ENCODE measurements at regions of chr20 and their contacts with region 1.

Region 1: GRCh38 chr20:34955232-34956040 is at the starts of genes GSS and MYH7B:
- DNase-seq: peak; percentile 96
- H3K4me3 ChIP-seq: peak within 1 kb of the TSS; percentile 67 to 68
- H3K27ac ChIP-seq: peak within 1 kb of the TSS; percentile 90 to 93
- H3K4me1 ChIP-seq: no peaks in the 10 kb centered on the region
- H3K27me3 ChIP-seq: no peaks in the 10 kb centered on the region
- CTCF ChIP-seq: peak in 3 of 4 experiments; percentile 54 to 79 (median 72)
- POLR2A ChIP-seq: peak; percentile 79
- total RNA-seq, gene GSS: 84.4 to 101 TPM
- total RNA-seq, gene MYH7B: 0.27 to 11.5 TPM

Region 2: DNA sequence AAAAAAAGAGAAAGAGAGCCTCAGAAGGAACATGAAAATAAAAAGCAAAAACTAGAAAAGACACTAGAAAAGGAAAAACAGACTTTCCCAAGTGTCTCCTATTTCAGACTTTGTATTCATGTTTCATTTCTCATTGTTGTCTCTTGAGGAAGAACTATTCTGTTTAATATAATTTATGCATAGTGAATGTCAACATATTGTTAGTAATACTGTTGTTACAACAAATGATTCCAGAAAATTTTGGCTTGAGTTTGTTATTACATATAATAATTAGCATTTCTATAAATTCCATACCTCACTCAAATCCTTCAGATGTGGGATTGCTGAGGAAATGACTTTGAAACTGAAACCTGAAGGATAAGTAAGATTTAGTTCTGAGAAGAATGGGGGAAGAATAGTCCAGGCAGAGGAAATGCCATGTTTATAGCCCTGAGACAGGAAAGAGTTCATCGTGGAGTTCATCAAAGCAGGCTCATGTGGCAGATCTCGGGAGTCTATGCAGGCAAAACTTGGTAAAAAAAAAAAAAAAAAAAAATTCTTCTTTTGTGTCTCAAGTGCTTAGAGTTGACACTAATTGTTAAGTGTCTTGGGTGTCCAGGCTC is 790.3 kb before region 1 on chr20:
- intact Hi-C with region 1: no loop called
- DNase-seq: no peak
- H3K4me3 ChIP-seq: no peak overlapping the region
- H3K27ac ChIP-seq: no peak overlapping the region
- H3K4me1 ChIP-seq: no peaks in the 10 kb centered on the region
- H3K27me3 ChIP-seq: no peaks in the 10 kb centered on the region
- CTCF ChIP-seq: no peak
- POLR2A ChIP-seq: no peak

Region 3: DNA sequence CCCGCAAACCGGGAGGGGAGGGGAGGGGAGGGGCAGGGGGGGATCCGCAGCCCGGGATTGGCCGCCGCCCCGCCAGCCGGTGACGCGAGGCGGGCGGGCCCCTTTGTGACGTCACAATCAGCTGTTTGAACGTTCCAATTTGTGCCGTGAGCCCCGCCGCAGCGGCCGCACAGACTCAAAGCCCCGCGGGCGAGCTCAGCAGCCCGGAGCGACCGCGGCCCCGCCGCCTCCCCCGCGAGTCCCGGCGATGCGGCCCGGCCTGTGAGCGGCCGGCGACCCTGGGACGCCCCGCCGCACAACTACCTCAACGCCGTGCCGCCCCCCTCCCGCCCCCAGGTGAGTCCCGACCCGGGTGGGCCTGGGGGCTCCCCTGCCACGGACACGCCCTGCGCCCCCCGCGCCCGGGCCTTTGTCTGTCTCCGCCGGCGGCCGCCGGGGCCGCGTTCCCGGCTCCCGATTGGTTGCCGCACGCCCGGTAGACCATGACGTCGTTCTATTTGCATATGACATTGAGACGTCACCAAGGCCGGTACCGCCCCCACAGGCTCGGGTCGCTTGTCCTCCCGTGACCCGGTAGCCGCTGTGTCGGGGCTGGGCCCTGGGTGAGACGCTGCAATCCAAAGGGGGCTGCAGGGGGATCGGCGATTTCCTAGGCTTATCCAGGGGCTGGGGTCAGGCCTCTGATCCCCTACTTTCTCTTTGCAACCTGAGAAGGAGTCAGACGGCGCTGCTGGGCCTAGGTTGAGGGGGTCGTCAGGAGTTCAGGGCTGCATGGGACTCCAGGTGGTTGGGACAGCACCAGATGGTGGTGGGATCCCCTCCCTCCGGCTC is 251.0 kb before region 1 on chr20 and contains the start of gene TP53INP2:
- intact Hi-C with region 1: loop called (anchors 5 kb)
- DNase-seq: peak; percentile 92
- H3K4me3 ChIP-seq: peak within 1 kb of the TSS; percentile 92 to 100
- H3K27ac ChIP-seq: peak within 1 kb of the TSS; percentile 97 to 100
- H3K4me1 ChIP-seq: no peaks in the 10 kb centered on the region
- H3K27me3 ChIP-seq: no peaks in the 10 kb centered on the region
- CTCF ChIP-seq: peak in 1 of 4 experiments; percentile 9
- POLR2A ChIP-seq: peak; percentile 87
- total RNA-seq, gene TP53INP2: 26.0 to 39.4 TPM

Region 4: DNA sequence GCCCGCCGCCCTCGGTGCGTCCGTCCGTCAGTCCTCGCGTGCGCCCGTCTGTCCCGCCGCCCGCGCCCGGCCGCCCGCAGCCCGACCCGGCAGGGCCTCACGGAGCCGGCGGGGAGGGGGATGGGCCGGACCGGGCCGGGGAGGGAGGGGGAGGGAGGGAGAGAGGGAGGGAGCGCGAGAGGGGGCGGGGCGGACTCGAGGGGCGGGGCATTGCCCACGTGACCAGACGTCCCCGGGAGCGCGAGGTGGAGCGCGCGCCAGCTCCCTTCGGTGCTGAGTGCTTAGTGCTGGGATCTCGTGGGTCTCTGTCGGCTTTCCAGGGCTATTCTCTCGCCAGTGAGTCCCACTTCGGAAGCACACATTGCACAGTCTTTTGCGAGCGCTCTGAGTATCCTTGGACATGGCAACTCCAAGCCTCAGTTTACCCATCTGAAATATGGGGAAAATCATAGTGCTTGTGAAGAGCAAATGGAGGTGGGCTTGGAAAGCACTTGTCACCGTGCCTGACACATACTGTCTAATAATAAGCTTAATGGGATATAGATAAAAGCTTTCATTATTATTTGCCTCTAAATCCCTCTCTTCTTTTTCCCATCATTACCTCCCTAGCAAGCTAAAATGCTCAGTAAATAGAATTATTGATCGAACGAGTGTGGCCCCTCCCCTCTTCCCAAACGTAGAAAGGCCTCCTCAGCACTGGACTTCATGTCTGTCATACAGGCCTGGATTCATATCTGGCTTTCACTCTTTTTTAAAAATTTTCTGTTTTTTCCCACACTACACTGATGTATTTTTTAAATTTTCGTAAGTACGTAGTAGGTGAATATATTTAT is 129.7 kb before region 1 on chr20 and contains the start of gene NCOA6:
- intact Hi-C with region 1: loop called (anchors 5 kb)
- DNase-seq: peak; percentile 87
- H3K4me3 ChIP-seq: peak within 1 kb of the TSS; percentile 60 to 93
- H3K27ac ChIP-seq: peak within 1 kb of the TSS; percentile 81 to 96
- H3K4me1 ChIP-seq: no peaks in the 10 kb centered on the region
- H3K27me3 ChIP-seq: no peaks in the 10 kb centered on the region
- CTCF ChIP-seq: no peak
- POLR2A ChIP-seq: no peak
- total RNA-seq, gene NCOA6: 19.6 to 43.7 TPM

Measured in prostate gland (tissue), 2 donors.